MCF 10A (cell line): ENCODE measurements at regions of chr13 and their contacts with region 1.

Region 1: DNA sequence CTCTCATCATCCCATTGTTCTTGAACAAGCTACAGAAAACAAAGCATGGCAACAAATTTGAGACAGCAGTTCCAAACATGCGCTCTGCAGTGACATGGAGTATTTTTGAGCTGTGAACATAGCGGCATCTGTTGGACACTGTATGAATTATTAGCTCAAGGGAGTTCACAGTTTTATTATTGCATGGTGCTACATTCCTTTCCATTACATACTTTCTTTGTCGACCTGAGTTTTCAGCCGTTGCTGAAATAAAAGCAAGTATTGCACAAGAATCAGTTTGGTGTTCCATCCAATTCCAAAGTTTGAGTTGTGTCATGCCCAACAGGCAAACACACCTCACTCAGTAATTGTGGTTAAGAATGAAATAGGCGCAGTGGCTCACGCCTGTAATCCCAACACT is 30.1 kb upstream of the METTL21C start:
- DNase-seq: peak; percentile 92
- H3K4me3 Mint-ChIP-seq: no peak overlapping the region
- H3K27ac Mint-ChIP-seq: no peak overlapping the region
- H3K4me1 Mint-ChIP-seq: peaks cover 14% of the 10 kb centered on the region
- H3K27me3 Mint-ChIP-seq: no peaks in the 10 kb centered on the region
- CTCF ChIP-seq: peak; percentile 72

Region 2: GRCh38 chr13:102020611-102021216 is 704.2 kb before region 1 on chr13:
- CTCF ChIA-PET with region 1: no interaction called
- POLR2A ChIA-PET with region 1: no interaction called
- intact Hi-C with region 1: no loop called
- DNase-seq: no peak
- H3K4me3 Mint-ChIP-seq: no peak overlapping the region
- H3K27ac Mint-ChIP-seq: no peak overlapping the region
- H3K4me1 Mint-ChIP-seq: peaks cover 15% of the 10 kb centered on the region
- H3K27me3 Mint-ChIP-seq: no peaks in the 10 kb centered on the region
- CTCF ChIP-seq: no peak

Region 3: GRCh38 chr13:102328909-102329308 is 396.0 kb before region 1 on chr13:
- CTCF ChIA-PET with region 1: no interaction called
- POLR2A ChIA-PET with region 1: no interaction called
- intact Hi-C with region 1: no loop called
- DNase-seq: no peak
- H3K4me3 Mint-ChIP-seq: no peak overlapping the region
- H3K27ac Mint-ChIP-seq: no peak overlapping the region
- H3K4me1 Mint-ChIP-seq: no peaks in the 10 kb centered on the region
- H3K27me3 Mint-ChIP-seq: no peaks in the 10 kb centered on the region
- CTCF ChIP-seq: no peak

Region 4: GRCh38 chr13:102580552-102581169 is 144.3 kb before region 1 on chr13:
- CTCF ChIA-PET with region 1: interaction called, 28 read pairs
- POLR2A ChIA-PET with region 1: interaction called, 4 read pairs
- intact Hi-C with region 1: loop called (anchors 1 kb)
- DNase-seq: peak; percentile 74
- H3K4me3 Mint-ChIP-seq: no peak overlapping the region
- H3K27ac Mint-ChIP-seq: no peak overlapping the region
- H3K4me1 Mint-ChIP-seq: peaks cover 5% of the 10 kb centered on the region
- H3K27me3 Mint-ChIP-seq: peaks cover 13% of the 10 kb centered on the region
- CTCF ChIP-seq: peak; percentile 67

Region 5: DNA sequence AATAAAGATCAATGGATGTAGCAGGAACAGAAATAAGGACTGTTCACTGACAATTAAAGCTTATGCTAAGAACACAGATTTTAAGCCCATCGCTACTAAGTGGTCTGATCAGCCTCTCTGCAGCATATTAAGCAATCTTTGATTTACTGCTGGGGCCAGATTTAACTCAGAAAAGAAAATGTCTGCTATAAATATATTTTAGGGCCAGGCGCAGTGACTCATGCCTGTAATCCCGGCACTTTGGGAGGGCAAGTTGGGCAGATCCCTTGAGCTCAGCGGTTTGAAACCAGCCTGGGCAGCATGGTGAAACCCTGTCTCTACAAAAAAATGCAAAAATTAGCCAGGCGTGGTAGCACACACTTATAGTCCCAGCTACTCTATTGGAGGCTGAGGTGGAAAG is 73.0 kb before region 1 on chr13:
- CTCF ChIA-PET with region 1: interaction called, 21 read pairs
- POLR2A ChIA-PET with region 1: interaction called, 22 read pairs
- intact Hi-C with region 1: loop called (anchors 5 kb)
- DNase-seq: peak; percentile 79
- H3K4me3 Mint-ChIP-seq: no peak overlapping the region
- H3K27ac Mint-ChIP-seq: peak overlapping the region; percentile 27
- H3K4me1 Mint-ChIP-seq: peaks cover 6% of the 10 kb centered on the region
- H3K27me3 Mint-ChIP-seq: no peaks in the 10 kb centered on the region
- CTCF ChIP-seq: no peak

Region 6: DNA sequence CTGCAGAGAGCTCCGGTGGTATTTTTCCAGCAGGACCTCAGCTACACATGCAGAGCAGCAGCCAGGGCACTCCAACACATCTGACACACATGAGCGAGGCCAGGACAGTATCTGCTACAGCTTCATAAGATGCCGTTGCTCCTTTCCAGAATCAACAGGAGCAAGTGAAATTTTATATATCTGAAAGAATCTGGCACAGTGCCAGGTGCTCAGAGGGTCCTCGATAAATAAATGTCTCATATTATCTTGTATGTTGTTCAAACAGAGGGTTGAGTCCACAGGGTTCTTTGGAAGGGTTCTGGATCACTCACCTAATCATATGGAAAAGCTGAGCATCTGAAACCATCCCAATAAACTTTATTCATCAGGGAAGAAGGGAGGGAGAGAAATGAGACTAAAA is 27.0 kb before region 1 on chr13:
- CTCF ChIA-PET with region 1: interaction called, 52 read pairs
- POLR2A ChIA-PET with region 1: no interaction called
- intact Hi-C with region 1: no loop called
- DNase-seq: no peak
- H3K4me3 Mint-ChIP-seq: no peak overlapping the region
- H3K27ac Mint-ChIP-seq: no peak overlapping the region
- H3K4me1 Mint-ChIP-seq: peaks cover under 1% of the 10 kb centered on the region
- H3K27me3 Mint-ChIP-seq: peaks cover 19% of the 10 kb centered on the region
- CTCF ChIP-seq: no peak

Region 7: DNA sequence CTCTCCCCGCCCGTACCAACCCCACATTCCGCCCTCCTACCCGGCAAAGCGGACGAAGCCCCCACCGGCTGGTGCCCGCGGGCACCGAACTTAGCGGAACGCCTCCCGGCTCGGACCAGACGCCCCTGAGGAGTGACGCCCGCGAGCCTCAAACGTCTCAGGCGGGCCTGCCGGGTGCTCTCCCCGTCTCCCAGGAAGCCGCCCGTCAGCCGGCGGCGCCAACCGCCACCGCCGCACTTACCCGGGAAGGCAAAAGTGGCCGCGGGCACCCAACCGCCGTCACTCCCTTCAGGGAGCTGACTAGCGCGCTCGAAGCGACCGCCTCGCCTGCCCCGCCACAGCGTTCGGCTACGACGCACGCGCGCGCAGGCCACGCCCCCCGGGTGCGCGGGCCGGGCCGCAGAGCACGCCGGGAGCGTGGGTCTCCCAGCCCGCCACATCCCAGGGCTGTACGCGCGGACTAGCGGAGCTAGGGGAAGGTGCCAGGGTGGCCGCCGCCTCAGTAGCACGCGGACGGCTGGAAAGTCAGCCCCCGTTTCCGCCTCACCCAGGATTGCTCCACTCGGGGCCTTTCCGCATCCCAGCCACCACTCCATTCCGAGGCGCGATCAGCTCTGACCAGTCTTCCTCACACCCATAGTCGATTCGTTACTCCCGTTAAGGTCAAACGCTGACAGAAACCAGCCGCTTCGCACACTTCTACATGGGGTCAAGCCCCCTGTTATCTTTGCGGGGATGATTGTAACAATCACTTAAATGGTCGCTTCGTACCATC is 48.7 kb after region 1 on chr13 and contains the start of gene TEX30:
- CTCF ChIA-PET with region 1: interaction called, 17 read pairs
- POLR2A ChIA-PET with region 1: interaction called, 10 read pairs
- intact Hi-C with region 1: loop called (anchors 2 kb)
- DNase-seq: peak; percentile 79
- H3K4me3 Mint-ChIP-seq: peak within 1 kb of the TSS; percentile 80
- H3K27ac Mint-ChIP-seq: peak within 1 kb of the TSS; percentile 87
- H3K4me1 Mint-ChIP-seq: peaks cover 18% of the 10 kb centered on the region
- H3K27me3 Mint-ChIP-seq: no peaks in the 10 kb centered on the region
- CTCF ChIP-seq: no peak
- total RNA-seq, gene TEX30: 10.7 and 14.2 TPM in 2 replicates

Region 8: GRCh38 chr13:102825921-102826706 is 101.2 kb after region 1 on chr13:
- CTCF ChIA-PET with region 1: interaction called, 4 read pairs
- POLR2A ChIA-PET with region 1: interaction called, 7 read pairs
- intact Hi-C with region 1: loop called (anchors 1 kb)
- DNase-seq: peak; percentile 91
- H3K4me3 Mint-ChIP-seq: peak overlapping the region; percentile 72
- H3K27ac Mint-ChIP-seq: peak overlapping the region; percentile 82
- H3K4me1 Mint-ChIP-seq: peaks cover 24% of the 10 kb centered on the region
- H3K27me3 Mint-ChIP-seq: no peaks in the 10 kb centered on the region
- CTCF ChIP-seq: peak; percentile 9